Natural killer cell (primary cell): ENCODE measurements at regions of chr12 and their contacts with region 1.

Region 1: DNA sequence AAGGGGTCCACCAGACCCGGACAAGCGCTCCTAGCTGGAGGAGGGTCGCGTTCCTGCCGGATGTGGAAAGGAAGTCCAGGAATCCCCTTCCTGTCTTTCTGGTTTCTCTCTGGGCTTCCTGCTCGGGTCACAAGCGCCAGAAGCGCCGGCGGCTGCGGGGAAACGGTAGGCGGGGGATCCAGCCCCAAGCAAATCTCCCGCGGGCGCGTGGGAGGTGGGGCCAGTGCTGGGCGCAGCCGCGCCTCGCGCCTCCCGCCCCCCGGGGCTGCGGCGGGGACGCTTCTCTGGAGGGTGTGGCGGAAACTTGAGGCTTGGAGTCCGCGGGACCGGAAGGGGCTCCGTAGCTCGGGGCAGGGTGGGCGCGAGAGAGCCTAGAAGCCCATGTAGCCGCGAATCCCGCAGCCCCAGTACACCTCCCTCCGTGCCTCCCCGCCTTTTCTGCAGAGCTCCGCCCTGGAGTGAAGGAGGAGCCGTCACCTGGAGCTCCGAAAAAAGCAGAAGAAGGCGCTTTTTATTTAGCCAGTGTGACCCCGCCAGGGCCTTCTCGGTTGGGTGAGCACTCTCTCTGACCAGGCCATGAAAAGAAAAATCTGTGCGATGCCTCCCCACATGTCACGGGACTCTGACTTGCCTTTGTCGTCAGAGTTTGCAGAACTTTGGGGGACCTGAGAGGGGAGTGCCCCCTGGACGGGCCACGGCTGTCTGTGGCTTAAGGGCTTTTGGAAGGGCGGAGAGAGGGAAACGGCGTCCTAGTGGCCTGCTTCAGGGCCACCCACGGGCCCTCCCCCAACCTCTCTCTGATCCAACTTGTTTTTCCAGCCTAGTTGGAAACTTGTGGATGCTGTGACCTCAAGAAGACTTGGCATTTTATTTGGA is 21.4 kb upstream of the CLEC2D start:
- DNase-seq: peak; percentile 87 to 96
- ATAC-seq: peak; percentile 62 to 87 (median 77)
- H3K4me3 ChIP-seq: peak overlapping the region; percentile 68
- H3K4me3 Mint-ChIP-seq: peak overlapping the region; percentile 98
- H3K27ac ChIP-seq: peak overlapping the region; percentile 90
- H3K27ac Mint-ChIP-seq: peak overlapping the region; percentile 89 to 94
- H3K4me1 ChIP-seq: peaks cover 20% of the 10 kb centered on the region
- H3K4me1 Mint-ChIP-seq: peaks cover 72 to 82% of the 10 kb centered on the region in 2 donors
- H3K27me3 ChIP-seq: no peaks in the 10 kb centered on the region
- H3K27me3 Mint-ChIP-seq: no peaks in the 10 kb centered on the region
- CTCF ChIP-seq: no peak

Region 2: GRCh38 chr12:7859552-7859951 is 1788.5 kb before region 1 on chr12:
- intact Hi-C with region 1: no loop called
- DNase-seq: no peak
- ATAC-seq: no peak
- H3K4me3 ChIP-seq: no peak overlapping the region
- H3K4me3 Mint-ChIP-seq: no peak overlapping the region
- H3K27ac ChIP-seq: no peak overlapping the region
- H3K27ac Mint-ChIP-seq: peak overlapping the region in 1 of 2 donors; percentile 69
- H3K4me1 ChIP-seq: peaks cover 13% of the 10 kb centered on the region
- H3K4me1 Mint-ChIP-seq: peaks cover 15 to 21% of the 10 kb centered on the region in 2 donors
- H3K27me3 ChIP-seq: peaks cover 2% of the 10 kb centered on the region
- H3K27me3 Mint-ChIP-seq: peaks cover 9 to 10% of the 10 kb centered on the region in 2 donors
- CTCF ChIP-seq: no peak

Region 3: GRCh38 chr12:9607716-9608115 is 40.3 kb before region 1 on chr12 and contains the start of gene KLRB1:
- intact Hi-C with region 1: loop called (anchors 2 kb)
- DNase-seq: peak in 1 of 2 donors; percentile 23
- ATAC-seq: peak in 1 of 3 donors; percentile 17
- H3K4me3 ChIP-seq: peak within 1 kb of the TSS; percentile 57
- H3K4me3 Mint-ChIP-seq: peak within 1 kb of the TSS; percentile 97
- H3K27ac ChIP-seq: peak within 1 kb of the TSS; percentile 81
- H3K27ac Mint-ChIP-seq: peak within 1 kb of the TSS; percentile 91 to 97
- H3K4me1 ChIP-seq: peaks cover 12% of the 10 kb centered on the region
- H3K4me1 Mint-ChIP-seq: peaks cover 69 to 78% of the 10 kb centered on the region in 2 donors
- H3K27me3 ChIP-seq: no peaks in the 10 kb centered on the region
- H3K27me3 Mint-ChIP-seq: no peaks in the 10 kb centered on the region
- CTCF ChIP-seq: no peak
- total RNA-seq, gene KLRB1: 194 to 310 (median 216) TPM

Region 4: GRCh38 chr12:9669534-9669933 is 21.5 kb after region 1 on chr12 and contains the start of gene CLEC2D:
- intact Hi-C with region 1: loop called (anchors 2 kb)
- DNase-seq: peak in 1 of 2 donors; percentile 77
- ATAC-seq: peak; percentile 45 to 63 (median 59)
- H3K4me3 ChIP-seq: peak within 1 kb of the TSS; percentile 47
- H3K4me3 Mint-ChIP-seq: peak within 1 kb of the TSS; percentile 70
- H3K27ac ChIP-seq: peak within 1 kb of the TSS; percentile 71
- H3K27ac Mint-ChIP-seq: peak within 1 kb of the TSS; percentile 84 to 91
- H3K4me1 ChIP-seq: peaks cover 31% of the 10 kb centered on the region
- H3K4me1 Mint-ChIP-seq: peaks cover 62 to 67% of the 10 kb centered on the region in 2 donors
- H3K27me3 ChIP-seq: no peaks in the 10 kb centered on the region
- H3K27me3 Mint-ChIP-seq: no peaks in the 10 kb centered on the region
- CTCF ChIP-seq: no peak
- total RNA-seq, gene CLEC2D: 140 to 219 (median 209) TPM

Region 5: GRCh38 chr12:9702255-9702654 is 54.2 kb after region 1 on chr12:
- intact Hi-C with region 1: loop called (anchors 5 kb)
- DNase-seq: peak in 1 of 2 donors; percentile 75
- ATAC-seq: peak; percentile 53 to 73 (median 72)
- H3K4me3 ChIP-seq: no peak overlapping the region
- H3K4me3 Mint-ChIP-seq: peak overlapping the region; percentile 85
- H3K27ac ChIP-seq: peak overlapping the region; percentile 59
- H3K27ac Mint-ChIP-seq: peak overlapping the region; percentile 89 to 92
- H3K4me1 ChIP-seq: peaks cover 16% of the 10 kb centered on the region
- H3K4me1 Mint-ChIP-seq: peaks cover 50 to 70% of the 10 kb centered on the region in 2 donors
- H3K27me3 ChIP-seq: no peaks in the 10 kb centered on the region
- H3K27me3 Mint-ChIP-seq: no peaks in the 10 kb centered on the region
- CTCF ChIP-seq: no peak

Region 6: DNA sequence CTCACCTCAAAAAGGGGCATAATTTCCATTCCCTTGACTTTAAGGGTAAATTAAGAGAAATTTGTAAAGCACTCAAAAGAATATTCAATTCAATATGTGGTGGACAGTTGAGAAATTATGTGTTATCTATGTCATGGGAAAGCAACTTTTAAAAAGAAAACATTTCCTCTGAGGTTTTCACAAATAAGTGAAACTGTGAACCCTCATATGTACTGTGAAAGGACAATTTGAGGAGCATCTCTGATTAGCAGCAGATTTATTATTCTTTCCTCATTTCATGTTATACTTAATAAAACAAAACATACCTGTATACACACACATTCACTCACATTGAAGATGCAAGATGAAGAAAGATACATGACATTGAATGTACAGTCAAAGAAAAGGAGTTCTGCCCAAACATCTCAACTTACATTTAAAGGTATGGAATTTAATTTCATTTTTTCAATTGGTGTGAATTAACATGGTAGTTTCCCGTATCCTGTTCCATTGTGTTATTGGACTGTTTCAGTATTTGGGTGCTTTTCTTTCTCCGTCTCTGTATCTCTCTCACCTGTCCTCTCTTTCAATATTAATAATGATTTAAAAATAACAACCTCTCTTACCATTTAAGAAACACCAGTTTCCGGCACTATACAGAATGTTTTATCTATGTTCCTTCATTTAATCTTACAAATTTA is 179.3 kb after region 1 on chr12 and contains the start of gene KLRF1:
- intact Hi-C with region 1: loop called (anchors 10 kb)
- DNase-seq: peak in 1 of 2 donors; percentile 24
- ATAC-seq: peak; percentile 66 to 84 (median 81)
- H3K4me3 ChIP-seq: peak within 1 kb of the TSS; percentile 88
- H3K4me3 Mint-ChIP-seq: peak within 1 kb of the TSS; percentile 100
- H3K27ac ChIP-seq: peak within 1 kb of the TSS; percentile 85
- H3K27ac Mint-ChIP-seq: peak within 1 kb of the TSS in 1 of 2 donors; percentile 91
- H3K4me1 ChIP-seq: peaks cover 3% of the 10 kb centered on the region
- H3K4me1 Mint-ChIP-seq: peaks cover 42% of the 10 kb centered on the region in 2 donors
- H3K27me3 ChIP-seq: no peaks in the 10 kb centered on the region
- H3K27me3 Mint-ChIP-seq: no peaks in the 10 kb centered on the region
- CTCF ChIP-seq: no peak
- total RNA-seq, gene KLRF1: 364 to 424 (median 392) TPM

Region 7: DNA sequence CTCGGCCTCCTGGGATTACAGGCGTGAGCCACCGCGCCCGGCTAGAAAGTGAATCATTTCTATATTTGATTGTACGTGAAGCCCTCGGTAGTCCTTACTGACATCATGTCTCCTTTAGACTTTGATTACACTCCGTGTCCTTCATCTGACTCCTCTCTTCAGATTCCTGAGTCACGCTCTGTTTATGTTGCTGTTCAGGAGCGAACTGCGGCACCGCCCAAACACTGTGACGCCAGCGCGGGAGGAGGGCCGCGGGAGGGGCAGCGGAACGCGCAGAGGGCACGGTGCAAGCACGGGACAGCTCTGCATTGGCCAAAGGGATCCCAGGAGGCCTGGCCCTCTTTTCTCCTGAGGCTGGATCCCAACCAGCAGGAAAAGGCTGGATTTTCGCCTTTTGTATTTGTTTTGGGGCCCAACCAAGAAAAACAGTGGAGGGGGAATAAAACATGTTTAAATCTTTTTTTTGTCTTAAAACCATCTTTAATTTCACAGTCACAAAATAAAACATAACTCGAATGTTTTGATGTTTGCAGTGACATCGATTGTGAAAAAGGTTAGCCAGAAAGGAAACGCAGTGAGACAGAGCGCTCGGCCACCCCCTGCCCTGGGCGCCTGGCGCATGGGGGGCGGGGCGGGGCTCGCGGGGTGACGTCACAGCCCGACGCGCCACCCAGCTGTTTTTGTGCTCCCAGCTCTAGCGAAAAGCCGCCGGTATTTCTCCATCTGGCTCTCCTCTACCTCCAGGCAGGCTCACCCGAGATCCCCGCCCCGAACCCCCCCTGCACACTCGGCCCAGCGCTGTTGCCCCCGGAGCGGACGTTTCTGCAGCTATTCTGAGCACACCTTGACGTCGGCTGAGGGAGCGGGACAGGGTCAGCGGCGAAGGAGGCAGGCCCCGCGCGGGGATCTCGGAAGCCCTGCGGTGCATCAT is 564.4 kb after region 1 on chr12 and contains the start of gene GABARAPL1:
- intact Hi-C with region 1: loop called (anchors 10 kb)
- DNase-seq: peak; percentile 88 to 92
- ATAC-seq: peak; percentile 68 to 85 (median 72)
- H3K4me3 ChIP-seq: peak within 1 kb of the TSS; percentile 97
- H3K4me3 Mint-ChIP-seq: peak within 1 kb of the TSS; percentile 95
- H3K27ac ChIP-seq: peak within 1 kb of the TSS; percentile 99
- H3K27ac Mint-ChIP-seq: peak within 1 kb of the TSS; percentile 91 to 97
- H3K4me1 ChIP-seq: peaks cover 38% of the 10 kb centered on the region
- H3K4me1 Mint-ChIP-seq: peaks cover 32 to 34% of the 10 kb centered on the region in 2 donors
- H3K27me3 ChIP-seq: no peaks in the 10 kb centered on the region
- H3K27me3 Mint-ChIP-seq: no peaks in the 10 kb centered on the region
- CTCF ChIP-seq: no peak
- total RNA-seq, gene GABARAPL1: 157 to 233 (median 160) TPM

Region 8: DNA sequence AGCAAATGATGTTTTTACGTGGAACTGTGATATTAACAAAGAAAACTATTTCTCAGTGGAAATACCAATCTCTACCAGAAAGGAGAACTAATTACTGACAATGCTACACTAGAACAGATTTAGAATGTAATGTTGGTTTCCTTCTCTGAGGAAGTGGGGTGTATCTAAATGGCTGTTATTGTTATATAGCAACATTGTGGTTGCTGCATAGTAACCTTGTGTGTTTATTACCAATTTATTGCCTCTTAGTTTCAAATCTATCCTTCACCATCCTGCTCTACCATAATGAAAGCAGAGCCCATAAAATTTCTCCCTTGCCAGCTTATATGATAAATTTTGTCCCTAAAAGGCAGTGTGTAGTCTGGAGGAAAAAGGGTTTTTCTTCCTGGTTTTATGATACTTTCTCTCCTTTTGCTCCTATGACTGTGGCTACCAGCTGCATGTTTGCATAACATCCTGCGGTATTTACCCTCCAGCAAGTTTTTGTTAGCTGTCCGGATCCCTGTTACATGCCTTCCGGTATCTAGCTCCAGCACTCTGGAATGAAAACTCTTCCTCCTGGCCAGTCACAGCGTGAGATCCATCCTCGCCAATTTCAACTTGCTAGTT is 747.4 kb after region 1 on chr12:
- intact Hi-C with region 1: loop called (anchors 5 kb)
- DNase-seq: peak in 1 of 2 donors; percentile 75
- ATAC-seq: peak; percentile 52 to 82 (median 75)
- H3K4me3 ChIP-seq: peak overlapping the region; percentile 5
- H3K4me3 Mint-ChIP-seq: peak overlapping the region; percentile 87
- H3K27ac ChIP-seq: peak overlapping the region; percentile 92
- H3K27ac Mint-ChIP-seq: peak overlapping the region; percentile 97 to 98
- H3K4me1 ChIP-seq: peaks cover 42% of the 10 kb centered on the region
- H3K4me1 Mint-ChIP-seq: peaks cover 63 to 68% of the 10 kb centered on the region in 2 donors
- H3K27me3 ChIP-seq: no peaks in the 10 kb centered on the region
- H3K27me3 Mint-ChIP-seq: no peaks in the 10 kb centered on the region
- CTCF ChIP-seq: no peak